Head of caudate nucleus (tissue), 42 donors: ENCODE measurements at regions of chr17 and their contacts with region 1.

Region 1: GRCh38 chr17:81512560-81513371 is at the start of gene ACTG1:
- DNase-seq: peak; percentile 83 to 97 (median 93)

Region 2: DNA sequence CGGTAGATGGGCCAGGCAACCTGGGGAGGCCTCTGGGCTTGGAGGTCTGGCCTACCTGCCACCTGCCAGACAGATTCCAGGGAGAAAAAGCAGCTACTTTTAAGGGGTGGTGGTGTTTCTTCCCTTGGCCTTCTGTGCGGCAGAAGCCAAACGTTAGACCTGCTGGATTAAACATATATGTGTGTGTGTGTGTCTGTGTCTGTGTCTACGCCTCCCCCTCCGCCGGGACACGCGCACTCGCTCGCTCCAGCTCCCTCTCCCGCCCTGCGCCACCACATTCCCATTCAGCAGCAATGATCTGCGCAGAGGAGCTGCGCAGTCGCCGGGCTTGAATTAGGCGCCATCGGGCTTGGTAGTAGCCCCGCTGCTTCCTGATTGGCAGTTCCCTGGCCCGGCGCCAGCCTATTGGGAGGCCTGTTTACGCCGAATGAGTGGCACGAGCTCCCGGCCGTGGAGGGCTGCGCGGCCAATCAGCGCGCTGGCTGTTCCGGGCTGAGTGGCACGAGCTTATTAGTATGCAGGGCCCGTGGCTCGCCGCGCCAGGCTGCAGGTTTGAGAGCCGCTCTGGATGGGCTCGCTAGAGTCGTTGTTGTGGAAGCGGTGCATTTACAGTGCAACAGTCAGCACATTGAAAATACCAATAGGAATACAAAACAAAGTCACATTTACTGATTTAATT is 117.7 kb before region 1 on chr17 and contains the start of gene BAHCC1:
- intact Hi-C with region 1: loop called (anchors 5 kb)
- DNase-seq: peak; percentile 99 to 100 (median 100)

Region 3: DNA sequence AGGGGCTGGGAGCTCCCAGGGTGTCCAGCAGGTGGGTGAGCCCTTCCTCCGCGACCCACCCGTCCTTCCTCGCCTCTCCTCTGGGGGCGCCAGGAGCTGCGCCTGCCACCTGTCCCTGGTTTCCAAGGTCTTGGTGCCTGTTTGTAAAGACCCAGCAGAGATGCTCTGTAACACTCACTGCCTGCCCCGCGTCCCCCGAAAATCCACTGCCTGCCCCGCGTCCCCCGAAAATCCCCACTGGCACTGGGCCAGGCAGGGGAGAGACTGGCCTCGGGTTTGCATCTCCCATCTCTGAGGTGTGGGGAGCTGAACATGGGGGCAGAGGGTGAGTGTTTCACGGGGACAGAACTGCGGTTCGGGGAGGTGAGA is 71.9 kb before region 1 on chr17:
- intact Hi-C with region 1: no loop called
- DNase-seq: no peak

Region 4: DNA sequence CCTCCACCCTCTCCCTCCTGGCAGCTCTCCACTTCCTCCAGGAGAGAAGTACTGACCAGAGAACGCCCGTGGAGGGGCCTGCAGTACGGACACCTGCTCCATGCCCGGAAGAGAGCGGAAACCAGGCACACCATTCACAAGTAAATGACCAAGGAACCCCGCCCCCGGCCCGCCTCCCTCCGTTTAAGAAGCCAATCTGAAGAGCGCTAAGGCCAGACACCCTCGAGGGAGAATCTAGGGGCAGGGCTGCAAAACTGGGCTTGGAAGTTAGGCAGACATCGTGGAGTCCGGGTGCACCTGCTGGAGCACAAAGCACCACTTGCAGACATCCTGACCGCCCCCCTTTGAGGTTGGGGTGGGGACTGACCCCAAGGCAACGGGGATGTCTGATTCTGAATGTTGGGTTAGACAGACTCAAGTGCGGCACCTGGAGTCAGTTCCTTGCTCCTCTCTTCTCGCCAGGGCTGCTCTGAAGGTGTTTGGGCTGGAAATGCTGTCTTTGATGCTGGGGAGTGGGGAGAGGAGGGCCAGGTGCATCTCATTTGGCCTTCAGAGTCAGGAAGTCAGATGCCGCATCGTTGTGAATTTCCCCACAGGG is 40.4 kb after region 1 on chr17:
- intact Hi-C with region 1: loop called (anchors 5 kb)
- DNase-seq: peak in 37 of 42 donors; percentile 14 to 64 (median 43)